ENCODE measurements at regions of chr13 and their contacts with region 1.

Region 1: GRCh38 chr13:72808917-72809500 is 27.1 kb downstream of the PIBF1 start:
- H3K4me3 ChIP-seq: no peak overlapping the region
- H3K27ac ChIP-seq: no peak overlapping the region
- H3K4me1 ChIP-seq: no peaks in the 10 kb centered on the region
- CTCF ChIP-seq: no peak

Region 2: GRCh38 chr13:72820156-72820897 is 11.3 kb after region 1 on chr13:
- CTCF ChIA-PET with region 1: interaction called, 10 read pairs
- POLR2A ChIA-PET with region 1: no interaction called
- H3K4me3 ChIP-seq: no peak overlapping the region
- H3K27ac ChIP-seq: no peak overlapping the region
- H3K4me1 ChIP-seq: no peaks in the 10 kb centered on the region
- CTCF ChIP-seq: no peak

Region 3: GRCh38 chr13:72839831-72840426 is 30.9 kb after region 1 on chr13:
- CTCF ChIA-PET with region 1: no interaction called
- POLR2A ChIA-PET with region 1: no interaction called
- H3K4me3 ChIP-seq: no peak overlapping the region
- H3K27ac ChIP-seq: no peak overlapping the region
- H3K4me1 ChIP-seq: no peaks in the 10 kb centered on the region
- CTCF ChIP-seq: peak; percentile 25; the same call in 1 of the 2 replicates

Region 4: DNA sequence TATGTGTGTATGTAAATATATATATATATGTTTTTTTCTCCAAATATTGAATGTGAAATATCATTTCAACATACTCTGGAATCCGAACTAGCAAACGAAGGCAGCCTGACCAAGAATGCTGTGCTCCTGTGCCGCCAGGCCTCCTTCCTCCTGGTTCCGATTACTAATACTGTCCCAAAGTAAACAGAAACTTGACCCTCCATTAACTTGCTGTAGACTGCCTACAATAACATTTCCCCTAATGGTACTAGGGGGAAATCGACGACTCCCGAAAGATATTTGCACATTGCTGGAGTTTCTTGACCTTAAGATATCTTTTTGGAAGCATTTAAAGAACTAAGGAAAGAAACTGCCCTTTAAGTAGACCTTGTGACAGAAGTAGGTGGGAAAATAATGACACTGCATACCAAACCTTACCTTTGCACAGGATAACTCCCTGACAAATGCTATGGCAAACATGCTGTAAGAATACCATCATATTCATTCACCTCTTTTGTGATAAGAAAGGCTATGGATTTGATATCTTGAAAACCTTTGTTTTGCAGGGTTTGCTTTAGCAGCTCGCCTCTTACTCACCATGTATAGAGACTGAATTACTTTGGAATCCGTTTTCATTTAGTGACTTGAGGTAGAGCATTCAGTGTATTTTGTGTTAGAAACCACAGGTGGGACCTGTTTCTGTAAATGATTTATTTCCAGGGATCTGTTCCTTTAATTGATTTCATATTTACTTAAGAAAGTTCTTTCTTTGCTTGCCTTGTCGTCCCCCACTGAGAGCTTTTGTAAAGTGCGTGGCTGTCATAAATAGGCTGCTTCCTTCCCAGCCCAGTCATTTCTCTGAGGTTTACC is 329.9 kb after region 1 on chr13:
- CTCF ChIA-PET with region 1: no interaction called
- POLR2A ChIA-PET with region 1: no interaction called
- H3K4me3 ChIP-seq: no peak overlapping the region
- H3K27ac ChIP-seq: no peak overlapping the region
- H3K4me1 ChIP-seq: no peaks in the 10 kb centered on the region
- CTCF ChIP-seq: no peak